ENCODE measurements at regions of chr17 and their contacts with region 1.

Region 1: DNA sequence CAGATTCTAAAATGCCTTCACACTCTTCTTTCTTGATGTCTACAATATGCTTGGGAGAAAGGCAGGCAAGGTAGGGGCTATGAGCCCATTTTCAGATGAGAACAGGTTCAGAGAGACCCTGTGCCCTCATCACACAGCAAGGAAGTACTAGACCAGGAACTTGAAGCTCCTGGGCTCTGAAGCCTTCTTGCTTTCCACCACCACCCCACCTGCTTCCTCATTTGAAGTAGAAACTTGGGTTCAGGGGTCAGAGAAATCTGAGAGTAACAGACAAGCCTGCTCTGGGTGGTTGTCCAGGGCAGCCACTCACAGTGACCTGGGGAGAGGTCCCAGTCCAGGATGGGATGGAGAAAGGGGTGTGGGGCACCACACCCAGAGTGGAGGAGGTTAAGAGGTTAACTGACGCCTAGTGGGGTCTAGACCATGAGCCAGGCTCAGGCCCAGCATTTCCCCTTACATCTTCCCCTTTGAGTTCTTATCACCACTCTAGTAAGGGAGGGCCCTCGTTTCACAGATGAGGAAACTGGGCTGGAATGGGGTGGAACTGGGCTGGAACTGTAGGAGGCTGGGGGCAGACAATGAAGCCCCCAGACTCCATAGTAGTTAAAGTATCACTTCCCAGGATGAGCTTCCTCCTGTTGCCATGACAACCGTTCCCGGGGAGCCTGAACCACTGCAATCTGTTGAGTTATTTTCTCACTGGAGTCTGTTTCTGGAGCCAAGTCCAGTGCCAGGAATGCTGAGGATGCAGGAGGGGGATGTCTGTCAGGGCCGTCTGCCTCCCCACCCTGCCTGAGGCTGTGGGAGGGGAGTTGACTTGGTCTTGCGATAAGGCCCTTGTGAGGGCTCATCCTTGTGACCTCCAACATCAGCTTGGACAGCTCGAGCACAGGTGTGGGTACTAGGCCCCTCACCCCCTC is 16.2 kb upstream of the PHF12 start:
- DNase-seq: no peak
- H3K4me3 ChIP-seq: no peak overlapping the region
- H3K27ac ChIP-seq: no peak overlapping the region
- H3K4me1 ChIP-seq: peaks cover 4% of the 10 kb centered on the region
- H3K27me3 ChIP-seq: no peaks in the 10 kb centered on the region
- CTCF ChIP-seq: no peak
- POLR2A ChIP-seq: no peak

Region 2: DNA sequence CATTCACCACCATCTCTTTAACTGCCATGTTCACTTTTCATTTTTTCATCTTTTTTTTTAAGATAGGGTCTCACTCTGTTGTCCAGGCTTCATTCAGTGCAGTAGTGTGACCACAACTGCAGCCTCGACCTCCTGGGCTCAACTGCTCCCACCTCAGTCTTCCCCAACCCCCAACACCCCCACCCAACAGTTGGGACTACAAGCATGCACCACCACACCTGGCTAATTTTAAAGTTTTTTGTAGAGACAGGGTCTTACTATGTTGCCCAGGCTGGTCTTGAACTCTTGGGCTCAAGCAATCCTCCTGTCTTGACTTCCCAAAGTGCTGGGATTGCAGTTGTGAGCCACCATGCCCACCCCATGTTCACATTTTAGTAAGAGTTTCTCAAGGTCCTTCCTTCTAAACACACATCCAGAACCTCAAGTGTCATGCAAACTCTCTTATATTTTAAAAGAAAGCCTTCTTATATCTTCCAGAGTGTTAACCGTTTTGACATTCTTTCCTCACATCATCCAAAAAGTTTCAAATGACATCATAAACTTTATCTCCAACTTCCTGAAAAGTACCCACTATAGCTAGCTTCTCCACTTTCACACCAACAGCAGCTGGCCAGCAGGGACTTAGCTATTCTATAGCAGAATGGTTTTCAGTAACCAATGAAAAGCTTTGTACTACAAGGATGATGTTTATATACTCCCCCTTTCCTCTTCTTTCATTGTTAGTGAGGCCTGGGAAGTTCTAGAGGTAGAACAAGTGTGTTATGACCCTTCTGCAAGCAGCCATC is 174.4 kb before region 1 on chr17:
- CTCF ChIA-PET with region 1: no interaction called
- POLR2A ChIA-PET with region 1: no interaction called
- dilution Hi-C with region 1: no loop called
- intact Hi-C with region 1: no loop called
- DNase-seq: peak; percentile 22
- H3K4me3 ChIP-seq: no peak overlapping the region
- H3K27ac ChIP-seq: no peak overlapping the region
- H3K4me1 ChIP-seq: peaks cover 3% of the 10 kb centered on the region
- H3K27me3 ChIP-seq: no peaks in the 10 kb centered on the region
- CTCF ChIP-seq: no peak
- POLR2A ChIP-seq: no peak

Region 3: DNA sequence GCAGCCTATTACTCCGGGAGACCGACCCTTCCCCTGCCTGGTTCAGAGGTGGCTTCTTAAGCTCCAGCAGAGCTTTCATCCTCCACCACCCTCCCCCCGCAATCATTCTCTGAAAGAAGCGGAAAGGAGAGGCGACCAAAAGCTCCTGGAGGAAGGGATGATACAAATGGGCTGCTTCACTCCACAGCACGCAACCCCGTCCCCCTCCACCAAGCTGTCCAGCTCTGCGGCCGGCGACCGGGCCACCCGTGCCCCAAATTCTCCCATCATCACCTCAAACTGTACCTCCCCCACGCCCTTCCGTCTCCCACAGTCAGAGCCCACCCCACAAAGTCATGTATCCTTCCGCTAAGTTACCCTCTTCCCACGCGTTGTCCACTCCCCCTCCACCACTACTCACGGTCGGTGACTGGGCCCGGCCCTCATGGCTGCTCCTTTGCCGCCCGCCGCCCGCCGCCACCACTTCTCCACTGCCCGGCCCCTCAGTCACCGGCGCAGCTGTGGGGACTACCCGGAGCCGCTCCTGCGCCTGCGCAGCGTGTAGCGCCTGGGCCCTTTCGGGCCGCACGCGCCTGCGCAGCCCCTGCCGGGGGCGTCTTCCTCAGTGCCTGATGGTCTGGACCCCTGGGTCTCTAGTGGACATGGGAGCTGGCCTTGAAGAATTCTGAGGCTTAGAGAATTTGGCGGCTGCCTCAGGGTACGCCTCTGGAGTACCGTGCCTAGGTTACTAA is 125.0 kb before region 1 on chr17 and contains the start of gene FAM222B:
- CTCF ChIA-PET with region 1: no interaction called
- POLR2A ChIA-PET with region 1: no interaction called
- dilution Hi-C with region 1: no loop called
- intact Hi-C with region 1: no loop called
- DNase-seq: peak; percentile 87
- H3K4me3 ChIP-seq: peak within 1 kb of the TSS; percentile 38 to 70 (median 65)
- H3K27ac ChIP-seq: peak within 1 kb of the TSS; percentile 54
- H3K4me1 ChIP-seq: peaks cover 19% of the 10 kb centered on the region
- H3K27me3 ChIP-seq: no peaks in the 10 kb centered on the region
- CTCF ChIP-seq: no peak
- POLR2A ChIP-seq: peak; percentile 72
- total RNA-seq, gene FAM222B: 30.6 and 33.7 TPM in 2 replicates

Region 4: GRCh38 chr17:28982131-28982951 is 14.9 kb after region 1 on chr17:
- CTCF ChIA-PET with region 1: interaction called, 25 read pairs
- POLR2A ChIA-PET with region 1: no interaction called
- dilution Hi-C with region 1: no loop called
- intact Hi-C with region 1: no loop called
- DNase-seq: peak; percentile 75
- H3K4me3 ChIP-seq: no peak overlapping the region
- H3K27ac ChIP-seq: peak overlapping the region; percentile 53
- H3K4me1 ChIP-seq: peaks cover 17% of the 10 kb centered on the region
- H3K27me3 ChIP-seq: peaks cover 0 to 6% of the 10 kb centered on the region in 2 experiments
- CTCF ChIP-seq: no peak
- POLR2A ChIP-seq: no peak

Region 5: DNA sequence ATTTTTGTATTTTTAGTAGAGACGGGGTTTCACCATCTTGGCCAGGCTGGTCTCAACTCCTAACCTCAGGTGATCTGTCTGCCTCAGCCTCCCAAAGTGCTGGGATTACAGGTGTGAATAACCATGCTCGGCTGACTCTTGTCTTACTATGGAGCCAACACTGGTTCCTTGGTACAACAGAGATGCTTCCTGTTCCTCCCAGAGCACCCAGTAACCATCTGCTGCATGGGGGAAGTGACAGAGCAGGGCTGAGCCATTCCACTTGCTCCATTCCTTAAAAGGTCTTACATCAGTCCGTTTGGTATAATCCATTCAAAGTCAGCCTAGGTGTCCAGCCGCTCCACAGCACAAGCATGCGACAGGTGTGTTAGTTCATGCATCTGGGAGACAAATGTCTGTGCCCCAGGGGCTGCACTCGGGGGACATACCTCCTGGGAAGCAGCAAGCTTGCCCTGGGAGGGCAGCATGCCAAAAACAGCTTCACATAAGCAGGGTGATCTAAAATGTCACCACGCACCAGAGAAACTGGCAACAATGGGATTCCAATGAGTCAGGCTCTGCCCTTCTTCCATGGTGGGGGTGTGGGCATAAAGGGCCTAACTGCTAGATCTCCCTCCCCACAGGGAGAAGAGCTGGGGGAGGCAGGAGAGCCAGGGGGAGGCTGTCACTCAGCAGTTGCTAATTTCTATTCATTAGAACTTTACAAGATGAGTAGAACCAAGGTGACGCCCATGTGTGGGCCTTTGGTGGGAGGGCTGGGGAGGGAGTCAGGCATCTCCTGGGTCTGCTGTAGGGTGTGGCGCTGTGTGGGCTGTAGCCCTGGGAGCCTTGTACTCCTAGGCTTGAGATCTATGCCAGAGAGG is 110.9 kb after region 1 on chr17:
- CTCF ChIA-PET with region 1: interaction called, 10 read pairs
- POLR2A ChIA-PET with region 1: no interaction called
- dilution Hi-C with region 1: no loop called
- intact Hi-C with region 1: no loop called
- DNase-seq: peak; percentile 14
- H3K4me3 ChIP-seq: no peak overlapping the region
- H3K27ac ChIP-seq: no peak overlapping the region
- H3K4me1 ChIP-seq: no peaks in the 10 kb centered on the region
- H3K27me3 ChIP-seq: no peaks in the 10 kb centered on the region
- CTCF ChIP-seq: no peak
- POLR2A ChIP-seq: no peak

Region 6: GRCh38 chr17:29102741-29103181 is 135.3 kb after region 1 on chr17:
- CTCF ChIA-PET with region 1: interaction called, 1,079 read pairs
- POLR2A ChIA-PET with region 1: no interaction called
- dilution Hi-C with region 1: no loop called
- intact Hi-C with region 1: no loop called
- DNase-seq: no peak
- H3K4me3 ChIP-seq: no peak overlapping the region
- H3K27ac ChIP-seq: no peak overlapping the region
- H3K4me1 ChIP-seq: no peaks in the 10 kb centered on the region
- H3K27me3 ChIP-seq: no peaks in the 10 kb centered on the region
- CTCF ChIP-seq: no peak
- POLR2A ChIP-seq: no peak

Region 7: GRCh38 chr17:29124117-29124924 is 156.8 kb after region 1 on chr17:
- CTCF ChIA-PET with region 1: interaction called, 1,079 read pairs
- POLR2A ChIA-PET with region 1: no interaction called
- dilution Hi-C with region 1: no loop called
- intact Hi-C with region 1: no loop called
- DNase-seq: peak; percentile 61
- H3K4me3 ChIP-seq: no peak overlapping the region
- H3K27ac ChIP-seq: no peak overlapping the region
- H3K4me1 ChIP-seq: no peaks in the 10 kb centered on the region
- H3K27me3 ChIP-seq: no peaks in the 10 kb centered on the region
- CTCF ChIP-seq: peak; percentile 60 to 61
- POLR2A ChIP-seq: no peak

Measured in endothelial cell of umbilical vein (primary cell).